ENCODE measurements at regions of chr17 and their contacts with region 1.

Region 1: GRCh38 chr17:62065598-62066468 is 755 bp upstream of the MED13 start:
- H3K4me3 Mint-ChIP-seq: peak overlapping the region; percentile 96
- H3K27ac Mint-ChIP-seq: peak overlapping the region; percentile 98
- H3K4me1 Mint-ChIP-seq: peaks cover 24% of the 10 kb centered on the region
- H3K27me3 Mint-ChIP-seq: peaks cover 2% of the 10 kb centered on the region

Region 2: DNA sequence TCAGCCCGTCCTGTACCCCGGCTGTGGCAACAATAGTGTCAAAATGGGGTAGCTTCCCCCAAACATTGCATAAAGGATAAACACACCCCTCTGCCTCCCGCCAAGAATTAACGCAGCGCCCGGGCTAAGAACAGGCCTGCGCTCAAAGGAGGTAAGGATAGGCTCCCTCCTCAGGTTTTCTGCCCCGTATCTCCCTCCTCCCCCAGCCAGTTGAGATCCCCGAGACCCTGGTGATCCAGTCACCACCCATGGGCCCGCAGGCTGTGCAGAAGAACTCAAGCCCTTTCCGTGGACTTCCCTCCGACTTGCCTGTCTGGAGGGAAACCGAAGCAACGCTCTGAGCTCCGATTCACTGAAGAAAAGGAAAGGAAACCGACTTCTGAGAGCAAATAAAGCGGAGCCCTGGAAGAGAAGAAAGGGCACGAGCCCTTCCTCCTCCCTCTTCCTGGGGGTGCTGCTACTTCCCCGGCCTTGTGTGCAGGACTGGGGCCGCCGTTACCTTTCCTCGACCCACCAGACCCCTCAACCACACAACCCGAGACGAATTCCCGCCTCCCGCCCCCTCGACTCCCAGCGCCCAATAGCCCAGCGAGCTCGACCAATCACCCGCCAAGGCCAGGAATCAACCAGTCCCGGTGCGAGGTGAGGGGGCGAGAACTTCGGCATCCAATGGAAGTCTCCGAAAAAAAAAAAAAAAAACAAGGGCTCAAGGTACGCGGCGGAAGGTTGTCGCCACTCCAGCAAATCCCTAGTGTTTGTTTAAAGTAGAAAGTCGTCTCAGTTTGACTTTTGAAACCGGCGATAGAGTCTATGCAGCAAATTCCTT is 202.6 kb before region 1 on chr17 and contains the start of gene BRIP1:
- intact Hi-C with region 1: loop called (anchors 10 kb)
- H3K4me3 Mint-ChIP-seq: peak within 1 kb of the TSS; percentile 97
- H3K27ac Mint-ChIP-seq: peak within 1 kb of the TSS; percentile 92
- H3K4me1 Mint-ChIP-seq: peaks cover 16% of the 10 kb centered on the region
- H3K27me3 Mint-ChIP-seq: no peaks in the 10 kb centered on the region

Region 3: DNA sequence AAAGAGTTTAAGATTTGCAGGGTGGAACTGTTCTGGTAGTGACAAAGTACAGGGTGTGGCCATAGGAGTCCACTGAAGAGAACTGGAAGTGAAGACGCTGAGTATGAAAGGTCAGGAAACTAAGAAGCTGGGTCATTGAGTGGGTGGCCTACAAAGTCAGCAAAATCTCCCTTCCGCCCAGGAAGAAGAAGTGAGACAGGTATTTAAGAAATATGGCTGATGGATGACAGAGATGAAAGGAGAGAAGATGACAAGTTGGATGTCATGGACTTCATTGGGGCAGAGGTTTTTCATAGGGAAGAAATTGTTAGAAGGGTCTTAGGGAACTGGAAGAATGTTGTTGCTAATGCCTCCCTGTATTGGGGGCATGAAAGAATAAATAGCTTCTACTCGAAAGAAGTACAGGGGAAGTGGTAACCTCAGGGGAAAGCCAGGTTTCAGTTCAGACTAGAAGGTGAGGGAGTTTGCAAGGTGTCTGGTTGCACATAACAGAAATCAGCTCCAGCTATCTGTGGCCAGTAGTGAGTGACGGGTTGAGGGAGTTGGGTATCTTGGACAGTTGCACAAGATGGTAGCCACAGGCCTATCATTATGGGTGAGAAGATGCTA is 32.9 kb after region 1 on chr17:
- intact Hi-C with region 1: no loop called
- H3K4me3 Mint-ChIP-seq: peak overlapping the region; percentile 1
- H3K27ac Mint-ChIP-seq: peak overlapping the region; percentile 70
- H3K4me1 Mint-ChIP-seq: peaks cover 50% of the 10 kb centered on the region
- H3K27me3 Mint-ChIP-seq: peaks cover 3% of the 10 kb centered on the region

Region 4: DNA sequence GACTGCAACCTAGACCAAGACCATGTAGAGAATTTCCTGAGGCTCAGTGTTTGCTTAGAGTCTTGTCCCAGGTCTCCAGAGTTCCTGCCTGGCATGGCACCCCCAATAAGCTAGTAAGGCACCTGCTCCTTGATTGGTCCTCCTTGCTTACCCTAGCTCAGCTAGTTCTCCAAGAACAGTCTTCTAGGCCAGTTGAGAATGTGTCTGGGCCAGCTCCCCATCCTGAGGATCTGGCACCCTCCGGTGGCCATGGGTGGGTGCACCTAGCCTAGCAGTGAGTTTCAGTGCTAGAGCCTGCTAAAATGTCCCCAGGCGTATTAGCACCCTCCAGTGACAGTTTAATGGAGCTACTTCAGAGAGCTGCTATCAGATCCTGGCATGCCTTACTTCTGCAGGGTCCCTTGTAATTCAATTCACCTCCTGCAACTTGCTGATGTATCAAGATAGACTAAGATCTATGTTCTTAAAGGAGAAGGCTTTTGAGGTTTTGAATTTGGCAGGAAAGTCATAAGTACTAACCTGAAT is 43.6 kb after region 1 on chr17:
- intact Hi-C with region 1: loop called (anchors 1 kb)
- H3K4me3 Mint-ChIP-seq: no peak overlapping the region
- H3K27ac Mint-ChIP-seq: no peak overlapping the region
- H3K4me1 Mint-ChIP-seq: peaks cover 10% of the 10 kb centered on the region
- H3K27me3 Mint-ChIP-seq: peaks cover 3% of the 10 kb centered on the region

Measured in dendritic cell treated with granulocyte-macrophage colony-stimulating factor and Interleukin-4, amounts not matched to agents 40 ng/mL and 50 ng/mL, for 4 days (primary cell).